Psoas muscle (tissue), 8 donors: ENCODE measurements at regions of chr19 and their contacts with region 1.

Region 1: GRCh38 chr19:39568604-39569003 is 28.6 kb upstream of the EID2 start:
- DNase-seq: no peak
- ATAC-seq: no peak
- H3K4me3 ChIP-seq: no peak overlapping the region
- H3K27ac ChIP-seq: no peak overlapping the region
- H3K4me1 ChIP-seq: no peaks in the 10 kb centered on the region
- H3K27me3 ChIP-seq: peaks cover 3 to 11% (median 9%) of the 10 kb centered on the region in 3 donors
- CTCF ChIP-seq: no peak

Region 2: DNA sequence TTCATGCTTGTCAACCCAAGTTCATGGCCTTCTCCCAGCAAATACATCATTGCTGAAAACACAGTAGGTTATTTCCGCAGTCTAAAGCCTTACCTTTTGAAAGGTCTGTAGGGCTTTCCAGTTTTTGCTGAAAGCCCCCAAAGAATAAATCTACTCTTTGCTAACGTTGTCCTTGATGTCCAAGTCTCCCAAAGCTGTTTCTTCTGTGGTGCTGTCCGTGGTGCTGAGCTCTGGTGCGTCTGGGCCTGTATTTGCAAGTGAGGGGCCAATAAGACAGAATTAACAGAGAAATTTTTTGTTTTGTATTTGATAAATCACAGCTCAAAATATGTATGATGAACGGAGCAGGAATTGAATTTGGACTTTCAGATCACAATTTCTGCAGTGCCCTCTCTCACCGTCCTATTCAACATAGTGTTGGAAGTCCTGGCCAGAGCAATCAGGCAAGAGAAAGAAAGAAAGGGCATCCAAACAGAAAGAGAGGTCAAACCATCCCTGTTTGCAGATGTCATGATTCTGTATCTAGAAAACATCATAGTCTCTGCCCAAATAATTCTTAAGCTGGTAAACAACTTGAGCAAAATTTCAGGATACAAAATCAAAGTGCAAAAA is 77.3 kb after region 1 on chr19:
- intact Hi-C with region 1: loop called in 1 of 2 experiments (anchors 5 kb)
- DNase-seq: no peak
- ATAC-seq: no peak
- H3K4me3 ChIP-seq: no peak overlapping the region
- H3K27ac ChIP-seq: no peak overlapping the region
- H3K4me1 ChIP-seq: no peaks in the 10 kb centered on the region
- H3K27me3 ChIP-seq: no peaks in the 10 kb centered on the region
- CTCF ChIP-seq: no peak

Region 3: GRCh38 chr19:39704181-39705044 is 135.8 kb after region 1 on chr19 and contains the start of gene LGALS14:
- intact Hi-C with region 1: no loop called
- DNase-seq: no peak
- ATAC-seq: no peak
- H3K4me3 ChIP-seq: no peak within 1 kb of the TSS
- H3K27ac ChIP-seq: no peak within 1 kb of the TSS
- H3K4me1 ChIP-seq: no peaks in the 10 kb centered on the region
- H3K27me3 ChIP-seq: peaks cover 0 to 4% (median 0%) of the 10 kb centered on the region in 3 donors
- CTCF ChIP-seq: no peak
- total RNA-seq, gene LGALS14: not detected